ENCODE measurements at regions of chr3 and their contacts with region 1.

Region 1: GRCh38 chr3:169980055-169980454 is 13.4 kb downstream of the SEC62 start:
- DNase-seq: no peak
- H3K4me3 Mint-ChIP-seq: no peak overlapping the region
- H3K27ac Mint-ChIP-seq: peak overlapping the region; percentile 1
- H3K4me1 Mint-ChIP-seq: peaks cover 14% of the 10 kb centered on the region
- H3K27me3 Mint-ChIP-seq: no peaks in the 10 kb centered on the region
- CTCF ChIP-seq: no peak

Region 2: DNA sequence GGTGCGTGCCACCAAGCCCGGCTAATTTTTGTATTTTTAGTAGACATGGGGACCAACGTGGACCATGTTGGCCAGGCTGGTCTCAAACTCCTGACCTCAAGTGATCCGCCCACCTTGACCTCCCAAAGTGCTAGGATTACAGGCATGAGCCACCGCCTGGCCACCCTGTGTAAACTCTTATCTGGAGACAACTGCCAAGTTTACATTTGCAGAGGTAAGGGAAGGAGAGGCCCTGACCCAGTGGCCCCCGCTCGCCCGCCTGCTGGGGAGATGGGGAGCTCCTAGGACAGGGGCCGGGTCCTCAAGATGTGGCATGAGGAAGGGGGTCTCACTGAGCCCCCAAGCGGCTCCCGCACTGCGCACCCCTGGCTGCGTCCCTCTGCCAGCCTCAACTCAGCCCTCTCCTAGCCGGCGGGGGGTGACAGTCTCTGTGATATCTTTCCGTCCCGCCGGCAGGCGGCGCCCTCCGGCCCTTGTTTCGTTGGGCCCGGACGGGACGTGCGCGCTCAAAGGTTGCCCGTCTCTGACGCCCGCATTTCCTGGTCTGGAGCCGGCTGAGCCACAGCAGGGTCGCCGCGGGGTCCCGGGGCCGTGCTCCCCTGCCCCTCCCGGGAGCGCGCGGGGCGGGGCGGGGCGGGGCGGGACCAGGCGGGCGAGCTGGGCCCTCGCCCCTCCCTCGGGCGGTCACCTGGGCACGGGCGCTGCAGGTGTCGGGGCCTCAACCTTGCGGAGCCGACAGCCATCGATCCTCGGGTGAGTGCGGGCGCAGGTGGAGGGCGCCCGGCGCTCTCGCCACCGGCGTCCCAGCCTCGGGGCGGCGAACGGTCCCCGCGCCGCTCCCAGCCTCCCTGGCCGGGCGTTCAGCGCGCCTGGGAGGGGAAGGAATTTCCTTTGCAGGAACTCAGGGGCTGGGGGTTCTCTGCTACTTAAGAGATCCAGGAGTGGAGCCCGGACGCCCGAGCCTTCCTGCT is 57.7 kb after region 1 on chr3 and contains the start of gene GPR160:
- CTCF ChIA-PET with region 1: no interaction called
- intact Hi-C with region 1: loop called (anchors 5 kb)
- DNase-seq: peak; percentile 97
- H3K4me3 Mint-ChIP-seq: peak within 1 kb of the TSS; percentile 93
- H3K27ac Mint-ChIP-seq: peak within 1 kb of the TSS; percentile 75
- H3K4me1 Mint-ChIP-seq: peaks cover 22% of the 10 kb centered on the region
- H3K27me3 Mint-ChIP-seq: no peaks in the 10 kb centered on the region
- CTCF ChIP-seq: peak; percentile 99
- total RNA-seq, gene GPR160: 48.6 and 53.8 TPM in 2 replicates

Region 3: DNA sequence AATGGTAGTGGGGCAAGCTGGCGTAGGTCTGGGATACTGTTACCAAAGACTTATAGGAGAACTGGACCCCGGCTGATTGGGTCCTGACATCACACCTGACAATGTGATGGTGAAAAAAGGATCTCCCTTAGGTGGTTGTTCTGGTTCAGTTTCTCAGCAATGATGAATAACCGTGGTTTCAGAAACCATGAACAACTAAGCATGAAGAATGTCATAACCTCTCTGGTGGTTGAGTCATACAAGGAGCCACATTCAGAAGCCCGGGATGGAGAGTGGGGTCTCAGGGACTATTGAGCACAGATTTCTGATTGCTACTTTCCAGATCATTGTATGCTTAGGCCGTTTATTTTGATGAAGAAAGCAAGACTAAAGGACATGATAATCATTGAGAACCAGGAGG is 75.2 kb after region 1 on chr3:
- CTCF ChIA-PET with region 1: no interaction called
- intact Hi-C with region 1: no loop called
- DNase-seq: no peak
- H3K4me3 Mint-ChIP-seq: no peak overlapping the region
- H3K27ac Mint-ChIP-seq: no peak overlapping the region
- H3K4me1 Mint-ChIP-seq: peaks cover 32% of the 10 kb centered on the region
- H3K27me3 Mint-ChIP-seq: no peaks in the 10 kb centered on the region
- CTCF ChIP-seq: no peak

Measured in Calu3 (cell line).